Activated CD4-positive, alpha-beta memory T cell treated with anti-CD3 and anti-CD28 coated beads, Interleukin-2, amount 10 ng/mL, durations not matched to agents 7 days and 5 days (primary cell): ENCODE measurements at regions of chr2 and their contacts with region 1.

Region 1: DNA sequence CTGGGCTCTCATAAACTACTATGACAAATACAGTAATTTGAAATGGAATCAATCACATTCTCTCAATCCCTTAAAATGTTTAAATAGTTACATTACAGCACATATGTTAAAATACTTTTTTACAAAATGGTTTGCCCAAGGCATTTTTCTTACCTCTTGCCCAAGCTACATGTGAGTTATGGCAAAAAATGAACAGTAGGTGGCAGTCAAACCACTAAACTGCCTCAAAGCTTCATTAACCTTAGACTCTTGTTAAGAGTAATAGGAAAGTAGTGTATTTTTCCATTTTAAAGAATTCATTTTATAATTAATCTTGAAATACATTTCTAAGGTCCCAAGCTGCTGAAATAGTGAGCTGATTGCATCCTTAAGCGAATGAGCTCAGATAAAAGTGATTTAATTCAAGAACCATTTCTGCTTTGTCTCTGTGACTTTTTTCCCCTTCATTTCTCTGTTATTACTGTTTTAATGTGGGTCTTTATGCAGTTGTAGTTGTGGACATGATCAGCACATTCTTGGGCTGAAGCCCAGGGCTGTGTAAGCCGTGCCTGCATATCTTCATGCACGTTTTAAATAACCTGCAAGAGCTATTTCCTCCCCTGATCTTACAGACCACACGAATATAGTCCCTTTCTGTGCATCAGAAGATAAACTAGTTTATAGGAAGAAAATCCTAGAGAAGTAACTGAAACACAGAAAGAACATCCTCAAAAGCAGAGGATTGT is 311.8 kb downstream of the LNPK start:
- DNase-seq: no peak
- H3K4me3 Mint-ChIP-seq: no peak overlapping the region
- H3K27ac Mint-ChIP-seq: no peak overlapping the region
- H3K4me1 Mint-ChIP-seq: no peaks in the 10 kb centered on the region
- H3K27me3 Mint-ChIP-seq: peaks cover 24% of the 10 kb centered on the region

Region 2: DNA sequence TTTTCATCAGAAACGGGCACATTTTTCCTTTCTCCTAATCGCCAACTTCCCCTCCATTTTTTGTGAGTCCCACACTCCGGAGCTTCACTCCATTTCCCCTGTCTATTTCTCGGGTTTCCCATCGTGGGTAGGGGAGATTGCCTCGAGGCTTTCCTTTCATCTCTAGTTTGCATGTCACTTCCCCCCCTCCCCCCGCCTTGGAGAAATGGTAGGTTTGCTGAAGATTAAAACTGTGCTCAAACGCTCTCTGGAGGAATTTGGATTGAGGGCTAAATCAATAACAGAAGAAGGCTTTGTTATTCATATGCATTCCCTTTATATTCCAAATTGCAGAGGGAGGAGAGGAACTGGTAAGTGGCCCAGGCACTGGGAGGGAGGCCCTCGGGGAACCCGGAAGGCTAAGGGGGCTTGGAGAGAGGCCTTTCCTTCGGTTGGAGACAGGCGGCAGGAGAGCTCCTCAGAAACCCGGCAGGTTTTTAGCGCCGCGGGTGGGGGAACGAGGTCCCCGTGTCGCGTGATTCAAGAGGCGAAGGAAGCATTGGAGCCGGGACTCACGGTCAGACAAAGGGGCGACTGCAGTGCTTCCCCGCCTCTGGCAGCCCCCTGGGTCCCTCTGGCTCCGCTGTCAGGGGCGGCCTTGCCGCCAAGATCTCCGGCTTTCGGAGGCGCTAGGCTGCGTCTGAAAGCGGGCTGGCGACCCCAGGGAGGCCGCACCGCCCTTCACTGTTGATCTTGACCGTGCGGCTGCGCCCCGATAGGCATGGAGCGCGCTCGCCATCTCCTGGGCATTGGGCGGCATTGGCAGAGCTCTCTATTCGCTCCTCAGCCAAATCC is 406.9 kb after region 1 on chr2:
- CTCF ChIA-PET with region 1: interaction called, 76 read pairs
- POLR2A ChIA-PET with region 1: no interaction called
- DNase-seq: peak; percentile 64
- H3K4me3 Mint-ChIP-seq: peak overlapping the region; percentile 60
- H3K27ac Mint-ChIP-seq: no peak overlapping the region
- H3K4me1 Mint-ChIP-seq: peaks cover 17% of the 10 kb centered on the region
- H3K27me3 Mint-ChIP-seq: peaks cover 88% of the 10 kb centered on the region